Activated naive CD4-positive, alpha-beta T cell treated with anti-CD3 and anti-CD28 coated beads for 36 hours (primary cell): ENCODE measurements at regions of chr2 and their contacts with region 1.

Region 1: GRCh38 chr2:75466708-75467311 is 93.9 kb downstream of the EVA1A start:
- DNase-seq: peak; percentile 38
- H3K4me3 Mint-ChIP-seq: no peak overlapping the region
- H3K27ac Mint-ChIP-seq: no peak overlapping the region
- H3K4me1 Mint-ChIP-seq: no peaks in the 10 kb centered on the region
- H3K27me3 Mint-ChIP-seq: peaks cover 24% of the 10 kb centered on the region

Region 2: DNA sequence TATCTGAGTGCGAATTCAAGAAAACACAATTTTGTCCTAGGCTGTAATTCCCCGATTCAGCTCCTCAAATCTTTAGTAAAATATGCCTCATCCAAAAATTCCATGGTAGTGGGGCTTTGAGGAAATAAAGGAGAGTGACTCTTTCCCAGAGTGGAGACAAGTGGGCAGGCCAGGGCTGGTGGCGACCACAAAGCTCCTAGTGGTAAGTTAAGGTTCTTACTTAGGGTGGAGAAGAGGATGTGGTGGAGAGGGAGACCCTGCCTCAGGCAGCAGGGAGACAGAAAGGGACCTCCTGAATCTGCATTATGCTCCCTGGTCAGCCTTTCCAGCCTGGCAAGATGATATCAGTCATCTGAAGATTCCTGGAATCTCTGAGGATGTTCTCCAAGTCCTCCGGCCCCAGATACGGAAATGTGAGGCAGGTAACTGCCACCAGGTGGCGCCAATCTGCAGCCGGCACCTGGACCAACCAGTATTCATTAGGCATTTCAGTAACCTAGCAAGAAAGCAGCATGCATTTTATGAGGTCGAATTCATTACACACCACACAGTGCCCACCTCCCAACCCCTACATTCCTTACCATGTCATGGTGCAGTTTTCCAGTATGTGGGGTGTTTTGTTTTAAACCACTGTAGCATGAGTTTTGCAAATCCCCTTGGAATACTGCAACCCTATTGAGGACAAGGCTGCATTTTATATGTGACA is 402.0 kb before region 1 on chr2:
- CTCF ChIA-PET with region 1: interaction called, 3 read pairs
- intact Hi-C with region 1: loop called (anchors 10 kb)
- DNase-seq: peak; percentile 61
- H3K4me3 Mint-ChIP-seq: no peak overlapping the region
- H3K27ac Mint-ChIP-seq: no peak overlapping the region
- H3K4me1 Mint-ChIP-seq: no peaks in the 10 kb centered on the region
- H3K27me3 Mint-ChIP-seq: no peaks in the 10 kb centered on the region

Region 3: GRCh38 chr2:75627895-75628504 is 161.2 kb after region 1 on chr2:
- CTCF ChIA-PET with region 1: interaction called, 7 read pairs
- intact Hi-C with region 1: loop called (anchors 1 kb)
- DNase-seq: peak; percentile 79
- H3K4me3 Mint-ChIP-seq: no peak overlapping the region
- H3K27ac Mint-ChIP-seq: no peak overlapping the region
- H3K4me1 Mint-ChIP-seq: no peaks in the 10 kb centered on the region
- H3K27me3 Mint-ChIP-seq: peaks cover 18% of the 10 kb centered on the region